ENCODE measurements at regions of chr17 and their contacts with region 1.

Region 1: GRCh38 chr17:55735731-55736405 is 13.2 kb upstream of the TMEM100 start:
- DNase-seq: peak; percentile 32
- H3K4me3 Mint-ChIP-seq: no peak overlapping the region
- H3K27ac Mint-ChIP-seq: no peak overlapping the region
- H3K4me1 Mint-ChIP-seq: peaks cover 15% of the 10 kb centered on the region
- H3K27me3 Mint-ChIP-seq: peaks cover 31% of the 10 kb centered on the region

Region 2: GRCh38 chr17:55717898-55718735 is 17.8 kb before region 1 on chr17:
- CTCF ChIA-PET with region 1: interaction called, 35 read pairs
- POLR2A ChIA-PET with region 1: interaction called, 3 read pairs
- DNase-seq: peak; percentile 65
- H3K4me3 Mint-ChIP-seq: no peak overlapping the region
- H3K27ac Mint-ChIP-seq: no peak overlapping the region
- H3K4me1 Mint-ChIP-seq: no peaks in the 10 kb centered on the region
- H3K27me3 Mint-ChIP-seq: peaks cover 17% of the 10 kb centered on the region

Region 3: GRCh38 chr17:55750750-55751657 is 15.1 kb after region 1 on chr17 and contains the start of gene PCTP:
- CTCF ChIA-PET with region 1: interaction called, 30 read pairs
- POLR2A ChIA-PET with region 1: no interaction called
- DNase-seq: peak; percentile 90
- H3K4me3 Mint-ChIP-seq: peak within 1 kb of the TSS; percentile 76
- H3K27ac Mint-ChIP-seq: peak within 1 kb of the TSS; percentile 33
- H3K4me1 Mint-ChIP-seq: peaks cover 15% of the 10 kb centered on the region
- H3K27me3 Mint-ChIP-seq: peaks cover 32% of the 10 kb centered on the region
- total RNA-seq, gene PCTP: 6.9 to 7.2 TPM

Region 4: DNA sequence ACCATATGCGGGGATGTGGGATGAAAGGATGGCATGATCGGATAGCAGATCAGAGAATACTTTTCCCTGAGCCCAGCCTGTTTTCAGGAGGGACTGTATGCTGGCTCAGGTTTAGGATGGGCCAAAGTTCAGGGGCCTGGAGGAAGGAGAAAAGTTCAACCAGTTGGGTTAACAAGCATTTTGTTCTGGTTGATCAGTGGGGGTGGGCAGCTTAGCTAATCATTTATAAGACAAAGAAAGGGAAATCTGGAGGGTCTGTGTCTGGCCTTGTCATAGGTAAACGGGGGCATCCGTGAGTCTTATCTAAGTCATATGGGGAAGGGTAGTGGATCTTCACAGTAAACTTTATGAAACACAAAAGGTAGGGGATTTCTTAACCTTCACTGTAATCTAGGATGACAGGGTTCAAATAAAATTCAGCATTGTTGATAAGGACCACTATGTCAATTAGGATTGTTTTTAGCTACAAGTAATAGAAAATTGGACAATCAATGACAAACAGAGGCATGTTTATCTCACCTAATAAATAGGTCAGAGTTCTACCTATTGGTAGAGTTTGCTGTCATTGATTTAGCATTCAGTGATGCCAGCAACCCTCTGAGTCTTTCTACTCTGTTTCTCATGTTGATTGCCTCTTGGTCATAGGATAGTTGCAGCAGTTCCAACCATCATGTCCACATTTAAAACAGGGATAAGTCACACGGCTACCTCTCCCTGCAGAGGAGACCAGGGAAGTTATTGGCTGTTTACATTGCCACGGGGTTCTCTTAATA is 26.4 kb after region 1 on chr17:
- CTCF ChIA-PET with region 1: no interaction called
- POLR2A ChIA-PET with region 1: no interaction called
- DNase-seq: no peak
- H3K4me3 Mint-ChIP-seq: no peak overlapping the region
- H3K27ac Mint-ChIP-seq: no peak overlapping the region
- H3K4me1 Mint-ChIP-seq: no peaks in the 10 kb centered on the region
- H3K27me3 Mint-ChIP-seq: no peaks in the 10 kb centered on the region